Naive thymus-derived CD4-positive, alpha-beta T cell (primary cell): ENCODE measurements at regions of chr4 and their contacts with region 1.

Region 1: DNA sequence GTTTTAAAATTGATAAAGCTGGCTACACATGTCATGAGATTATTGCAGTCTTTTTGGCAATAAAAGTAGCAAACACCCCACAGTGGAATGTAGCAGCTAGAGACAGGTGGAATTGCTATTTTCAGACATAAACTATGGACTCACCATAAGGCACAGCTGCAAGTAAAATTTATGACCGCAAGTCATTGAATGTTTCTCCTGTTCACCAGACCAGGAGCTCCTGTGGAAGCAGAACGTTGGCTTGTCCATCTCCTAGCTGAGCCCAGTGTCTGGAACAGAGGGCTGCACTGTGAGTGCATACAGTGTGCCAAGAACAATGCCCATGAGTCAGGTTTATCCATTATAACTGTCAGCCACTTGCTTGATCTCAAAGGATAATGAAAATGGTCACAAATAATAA is 538.2 kb downstream of the INPP4B start:
- DNase-seq: no peak
- ATAC-seq: no peak
- H3K4me3 ChIP-seq: no peak overlapping the region
- H3K4me3 Mint-ChIP-seq: no peak overlapping the region
- H3K27ac ChIP-seq: no peak overlapping the region
- H3K27ac Mint-ChIP-seq: peak overlapping the region in 2 of 9 donors; percentile 14 to 68
- H3K4me1 ChIP-seq: peaks cover 0 to 6% of the 10 kb centered on the region in 2 donors
- H3K4me1 Mint-ChIP-seq: peaks cover 11 to 86% (median 72%) of the 10 kb centered on the region in 7 donors
- H3K27me3 ChIP-seq: no peaks in the 10 kb centered on the region
- H3K27me3 Mint-ChIP-seq: no peaks in the 10 kb centered on the region

Region 2: DNA sequence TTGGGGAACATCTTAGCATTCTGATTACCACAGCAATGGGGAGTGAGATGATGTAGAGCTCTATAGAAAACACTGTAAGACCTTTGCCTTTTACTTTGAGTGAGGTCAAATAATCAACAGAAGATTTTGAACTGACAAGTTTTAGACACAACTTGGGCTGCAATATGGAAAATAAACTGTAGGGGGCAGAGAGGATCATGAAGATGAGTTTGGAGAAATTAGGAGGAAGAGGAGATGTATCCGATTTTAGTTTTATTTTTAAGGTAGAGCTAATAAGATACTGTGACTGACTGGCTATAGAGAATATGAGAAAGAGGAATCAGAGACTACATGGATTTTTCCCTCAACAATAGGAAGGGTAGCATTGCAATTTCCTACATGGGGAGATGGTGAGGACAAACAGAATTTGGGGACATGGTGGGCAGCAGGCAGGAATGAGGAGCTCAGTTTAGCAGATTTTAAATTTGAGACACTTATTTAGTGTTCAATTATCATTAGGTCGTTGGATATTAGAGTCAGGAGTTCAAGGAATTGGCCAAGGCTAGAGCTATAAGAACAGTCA is 24.9 kb before region 1 on chr4:
- CTCF ChIA-PET with region 1: no interaction called
- POLR2A ChIA-PET with region 1: interaction called, 3 read pairs
- intact Hi-C with region 1: loop called in 1 of 2 experiments (anchors 1 kb)
- DNase-seq: peak in 7 of 9 donors; percentile 26 to 53 (median 38)
- ATAC-seq: peak; percentile 64
- H3K4me3 ChIP-seq: no peak overlapping the region
- H3K4me3 Mint-ChIP-seq: no peak overlapping the region
- H3K27ac ChIP-seq: no peak overlapping the region
- H3K27ac Mint-ChIP-seq: no peak overlapping the region
- H3K4me1 ChIP-seq: peaks cover 7 to 15% of the 10 kb centered on the region in 2 donors
- H3K4me1 Mint-ChIP-seq: peaks cover 9 to 35% (median 25%) of the 10 kb centered on the region in 7 donors
- H3K27me3 ChIP-seq: no peaks in the 10 kb centered on the region
- H3K27me3 Mint-ChIP-seq: no peaks in the 10 kb centered on the region

Region 3: GRCh38 chr4:142293536-142293935 is 14.3 kb before region 1 on chr4:
- CTCF ChIA-PET with region 1: interaction called, 3 read pairs
- POLR2A ChIA-PET with region 1: interaction called, 10 read pairs
- intact Hi-C with region 1: loop called in 1 of 2 experiments (anchors 2 kb)
- DNase-seq: no peak
- ATAC-seq: no peak
- H3K4me3 ChIP-seq: no peak overlapping the region
- H3K4me3 Mint-ChIP-seq: peak overlapping the region in 5 of 10 donors; percentile 1 to 25 (median 24)
- H3K27ac ChIP-seq: no peak overlapping the region
- H3K27ac Mint-ChIP-seq: peak overlapping the region in 6 of 9 donors; percentile 21 to 52 (median 34)
- H3K4me1 ChIP-seq: no peaks in the 10 kb centered on the region
- H3K4me1 Mint-ChIP-seq: peaks cover 11 to 78% (median 56%) of the 10 kb centered on the region in 7 donors
- H3K27me3 ChIP-seq: no peaks in the 10 kb centered on the region
- H3K27me3 Mint-ChIP-seq: no peaks in the 10 kb centered on the region

Region 4: DNA sequence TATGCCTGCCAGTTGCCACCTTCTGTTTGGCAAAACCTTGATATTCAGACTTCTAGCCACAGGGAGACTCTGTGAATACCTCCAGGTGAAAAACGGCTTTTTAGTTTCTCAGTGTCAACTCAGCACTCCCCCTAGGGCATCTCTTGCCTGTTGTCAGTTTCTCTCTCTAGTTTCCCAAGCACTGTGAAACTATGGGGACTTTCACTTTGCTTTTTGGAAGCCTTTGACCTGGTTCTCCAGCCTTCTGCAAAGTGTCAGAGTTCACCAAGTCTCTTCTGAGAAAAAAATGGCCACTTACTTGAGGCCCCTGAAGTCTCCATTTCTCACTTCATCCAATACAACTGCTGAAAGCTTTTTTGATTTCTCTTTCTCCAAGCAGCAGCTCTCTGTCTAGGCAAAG is 16.7 kb after region 1 on chr4:
- CTCF ChIA-PET with region 1: no interaction called
- POLR2A ChIA-PET with region 1: no interaction called
- intact Hi-C with region 1: loop called in 1 of 2 experiments (anchors 2 kb)
- DNase-seq: no peak
- ATAC-seq: no peak
- H3K4me3 ChIP-seq: no peak overlapping the region
- H3K4me3 Mint-ChIP-seq: peak overlapping the region in 2 of 10 donors; percentile 17 to 19
- H3K27ac ChIP-seq: no peak overlapping the region
- H3K27ac Mint-ChIP-seq: peak overlapping the region in 7 of 9 donors; percentile 2 to 86 (median 47)
- H3K4me1 ChIP-seq: peaks cover 9 to 19% of the 10 kb centered on the region in 2 donors
- H3K4me1 Mint-ChIP-seq: peaks cover 21 to 90% (median 80%) of the 10 kb centered on the region in 7 donors
- H3K27me3 ChIP-seq: no peaks in the 10 kb centered on the region
- H3K27me3 Mint-ChIP-seq: no peaks in the 10 kb centered on the region

Region 5: DNA sequence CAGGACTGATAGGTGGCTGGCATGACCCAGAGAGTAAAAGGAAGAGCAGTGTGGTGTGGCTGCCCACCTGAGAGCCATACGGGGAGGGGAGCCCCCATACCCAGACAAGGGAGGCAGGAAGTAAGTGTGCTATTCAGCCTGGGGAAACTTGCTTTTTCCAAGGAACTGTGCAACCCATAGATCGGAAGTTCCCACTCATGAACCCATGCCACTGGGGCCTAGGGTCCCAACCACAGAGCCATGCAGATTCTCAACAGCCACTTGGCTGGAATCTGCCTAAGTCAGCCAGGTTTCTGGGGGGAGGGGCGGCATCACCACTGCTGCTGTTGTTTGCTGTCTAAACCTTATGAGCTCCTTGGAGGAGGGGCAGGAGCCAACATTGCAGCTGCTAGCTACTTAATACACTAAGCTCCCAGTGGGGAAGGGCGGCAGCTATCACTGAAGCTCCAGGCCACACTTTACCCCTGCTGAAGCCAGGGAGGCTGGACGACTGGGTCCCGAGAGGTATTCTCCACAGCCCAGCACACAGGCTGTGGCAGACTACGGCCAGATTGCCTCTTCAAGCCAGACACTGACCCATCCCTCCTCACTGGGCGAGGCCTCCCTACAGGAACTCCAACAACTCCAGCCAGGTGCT is 127.9 kb after region 1 on chr4:
- CTCF ChIA-PET with region 1: no interaction called
- POLR2A ChIA-PET with region 1: no interaction called
- intact Hi-C with region 1: no loop called
- DNase-seq: no peak
- ATAC-seq: no peak
- H3K4me3 ChIP-seq: no peak overlapping the region
- H3K4me3 Mint-ChIP-seq: no peak overlapping the region
- H3K27ac ChIP-seq: no peak overlapping the region
- H3K27ac Mint-ChIP-seq: peak overlapping the region in 2 of 9 donors; percentile 21 to 49
- H3K4me1 ChIP-seq: peaks cover 4 to 8% of the 10 kb centered on the region in 2 donors
- H3K4me1 Mint-ChIP-seq: peaks cover 8 to 43% (median 31%) of the 10 kb centered on the region in 7 donors
- H3K27me3 ChIP-seq: no peaks in the 10 kb centered on the region
- H3K27me3 Mint-ChIP-seq: no peaks in the 10 kb centered on the region